ENCODE measurements at regions of chr14 and their contacts with region 1.

Region 1: DNA sequence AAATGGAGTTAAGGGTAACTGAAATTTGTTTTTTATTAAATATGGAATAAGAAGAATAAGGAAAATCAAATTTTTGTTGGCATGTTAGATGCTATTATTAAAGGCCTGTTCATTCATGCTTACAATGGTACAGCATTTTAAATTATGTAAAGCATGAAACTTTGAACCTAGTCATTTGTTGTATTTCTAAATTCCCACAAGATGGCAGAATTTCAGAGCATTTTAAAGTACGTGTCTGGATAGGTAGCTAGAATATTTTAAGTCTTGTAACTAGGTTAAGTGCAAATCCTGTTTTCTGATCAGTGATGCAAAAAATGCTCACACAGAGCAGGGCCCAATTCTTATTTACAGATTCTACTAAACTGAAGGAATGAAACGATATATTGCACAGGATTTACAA is 585.6 kb upstream of the MIS18BP1 start:
- DNase-seq: peak; percentile 57
- ATAC-seq: no peak
- H3K4me3 ChIP-seq: no peak overlapping the region
- H3K27ac ChIP-seq: no peak overlapping the region
- H3K4me1 ChIP-seq: no peaks in the 10 kb centered on the region
- H3K27me3 ChIP-seq: peaks cover 55% of the 10 kb centered on the region
- CTCF ChIP-seq: peak; percentile 64

Region 2: GRCh38 chr14:45868377-45868776 is 29.8 kb after region 1 on chr14:
- CTCF ChIA-PET with region 1: no interaction called
- POLR2A ChIA-PET with region 1: no interaction called
- intact Hi-C with region 1: no loop called
- DNase-seq: no peak
- ATAC-seq: no peak
- H3K4me3 ChIP-seq: no peak overlapping the region
- H3K27ac ChIP-seq: no peak overlapping the region
- H3K4me1 ChIP-seq: no peaks in the 10 kb centered on the region
- H3K27me3 ChIP-seq: peaks cover 38% of the 10 kb centered on the region
- CTCF ChIP-seq: no peak

Region 3: DNA sequence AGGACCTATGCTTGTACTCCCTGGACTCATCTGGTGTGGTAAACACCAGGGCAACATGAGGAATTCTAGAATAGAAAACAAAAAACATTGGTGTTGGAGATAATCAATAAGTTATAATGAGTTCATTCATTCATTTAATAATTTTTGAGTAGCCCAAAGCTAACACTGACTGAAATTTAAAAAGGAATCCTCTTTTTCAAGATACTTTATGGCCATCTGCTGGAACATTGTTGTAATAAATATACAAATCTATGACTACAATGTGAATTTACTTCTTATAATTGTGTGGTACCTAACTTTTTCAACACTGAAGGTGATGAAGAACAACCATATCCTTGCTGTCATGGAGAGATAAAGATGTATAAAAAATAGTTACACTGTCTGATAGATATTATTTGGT is 101.7 kb after region 1 on chr14:
- CTCF ChIA-PET with region 1: no interaction called
- POLR2A ChIA-PET with region 1: interaction called, 4 read pairs
- intact Hi-C with region 1: loop called (anchors 1 kb)
- DNase-seq: peak; percentile 43
- ATAC-seq: 0 out of 2 replicates have a peak, but pooled peaks have one; percentile 37
- H3K4me3 ChIP-seq: no peak overlapping the region
- H3K27ac ChIP-seq: no peak overlapping the region
- H3K4me1 ChIP-seq: no peaks in the 10 kb centered on the region
- H3K27me3 ChIP-seq: peaks cover 33% of the 10 kb centered on the region
- CTCF ChIP-seq: peak; percentile 64

Measured in PC-3 (cell line).